ENCODE measurements at regions of chr16 and their contacts with region 1.

Region 1: DNA sequence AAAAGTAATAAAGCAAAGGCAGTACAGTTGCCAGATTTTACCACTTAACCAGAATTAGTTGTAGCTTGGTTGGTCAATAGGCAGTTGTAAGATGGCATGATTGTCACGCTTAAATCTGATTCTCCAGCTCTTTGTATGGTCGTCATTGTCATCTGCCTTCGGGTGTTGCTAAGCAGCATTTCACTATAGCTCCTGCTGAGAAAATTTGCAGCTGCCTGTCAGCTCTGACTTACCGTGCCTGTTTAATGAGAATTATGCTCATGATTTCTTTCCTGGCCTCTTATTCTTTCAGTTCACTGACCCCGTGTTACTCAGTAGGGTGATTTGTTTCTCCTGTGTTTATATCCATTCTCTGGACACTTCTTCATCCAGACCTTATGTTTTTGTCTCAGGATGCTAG is 66.7 kb downstream of the TANGO6 start:
- DNase-seq: no peak
- H3K4me3 ChIP-seq: no peak overlapping the region
- H3K27ac ChIP-seq: no peak overlapping the region
- H3K4me1 ChIP-seq: peaks cover 0 to 2% (median under 1%) of the 10 kb centered on the region in 4 experiments; a peak in 2 of 7 replicates
- H3K27me3 ChIP-seq: no peaks in the 10 kb centered on the region
- CTCF ChIP-seq: no peak
- EP300 ChIP-seq: no peak
- POLR2A ChIP-seq: no peak
- RAD21 ChIP-seq: no peak

Region 2: DNA sequence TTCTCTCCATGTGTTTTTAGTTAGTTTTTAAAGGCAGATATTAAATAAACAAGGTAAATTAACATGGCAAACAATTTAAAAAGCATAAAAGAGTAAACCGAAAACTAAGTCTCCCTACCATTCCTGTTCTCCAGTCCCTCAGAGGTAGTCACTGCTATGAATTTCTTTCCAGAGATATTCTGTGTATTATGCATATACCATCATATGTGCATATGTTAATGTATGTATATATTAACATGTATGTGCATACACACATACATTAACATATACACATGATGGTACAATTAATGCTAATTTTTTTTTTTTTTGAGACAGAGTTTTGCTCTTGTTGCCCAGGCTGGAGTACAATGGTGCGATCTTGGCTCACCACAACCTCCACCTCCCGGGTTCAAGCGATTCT is 34.2 kb before region 1 on chr16:
- CTCF ChIA-PET with region 1: no interaction called
- POLR2A ChIA-PET with region 1: no interaction called
- DNase-seq: no peak
- H3K4me3 ChIP-seq: no peak overlapping the region
- H3K27ac ChIP-seq: no peak overlapping the region
- H3K4me1 ChIP-seq: no peaks in the 10 kb centered on the region
- H3K27me3 ChIP-seq: no peaks in the 10 kb centered on the region
- CTCF ChIP-seq: no peak
- EP300 ChIP-seq: no peak
- POLR2A ChIP-seq: no peak
- RAD21 ChIP-seq: no peak

Region 3: GRCh38 chr16:69003500-69003899 is 93.4 kb after region 1 on chr16:
- CTCF ChIA-PET with region 1: no interaction called
- POLR2A ChIA-PET with region 1: no interaction called
- DNase-seq: no peak
- H3K4me3 ChIP-seq: no peak overlapping the region
- H3K27ac ChIP-seq: no peak overlapping the region
- H3K4me1 ChIP-seq: no peaks in the 10 kb centered on the region
- H3K27me3 ChIP-seq: no peaks in the 10 kb centered on the region
- CTCF ChIP-seq: no peak
- EP300 ChIP-seq: no peak
- POLR2A ChIP-seq: no peak
- RAD21 ChIP-seq: no peak

Region 4: DNA sequence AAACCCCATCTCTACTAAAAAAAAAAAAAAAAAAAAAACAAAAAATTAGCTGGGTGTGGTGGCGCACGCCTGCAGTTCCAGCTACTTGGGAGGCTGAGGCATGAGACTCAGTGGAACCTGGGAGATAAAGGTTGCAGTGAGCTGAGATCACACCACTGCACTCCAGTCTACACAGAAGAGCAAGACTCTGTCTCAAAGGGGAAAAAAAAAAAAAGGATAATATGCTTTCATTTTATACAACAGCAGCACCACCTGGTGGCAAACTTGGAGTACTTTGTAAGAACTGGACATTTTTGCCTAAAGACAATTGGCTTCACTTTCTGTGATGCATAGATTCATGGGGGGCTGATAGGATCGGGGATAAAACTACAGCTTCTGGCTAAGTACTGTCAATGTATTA is 213.9 kb after region 1 on chr16:
- CTCF ChIA-PET with region 1: interaction called, 85 read pairs
- POLR2A ChIA-PET with region 1: interaction called, 3 read pairs
- DNase-seq: no peak
- H3K4me3 ChIP-seq: no peak overlapping the region
- H3K27ac ChIP-seq: no peak overlapping the region
- H3K4me1 ChIP-seq: no peaks in the 10 kb centered on the region
- H3K27me3 ChIP-seq: no peaks in the 10 kb centered on the region
- CTCF ChIP-seq: peak in 2 of 3 experiments; percentile 68; a peak in 3 of 4 replicates
- EP300 ChIP-seq: no peak
- POLR2A ChIP-seq: no peak
- RAD21 ChIP-seq: peak; percentile 81 to 85